A549 (cell line): ENCODE measurements at regions of chr2 and their contacts with region 1.

Region 1: GRCh38 chr2:142130111-142131009 is 456 bp downstream of the LRP1B start:
- DNase-seq: peak in 1 of 2 experiments; percentile 25
- ATAC-seq: peak; percentile 80 to 87
- H3K4me3 ChIP-seq: peak overlapping the region; percentile 43
- H3K27ac ChIP-seq: no peak overlapping the region
- H3K4me1 ChIP-seq: peaks cover 7% of the 10 kb centered on the region; the same call in 2 of the 3 replicates
- CTCF ChIP-seq: no peak
- EP300 ChIP-seq: no peak
- POLR2A ChIP-seq: no peak
- RAD21 ChIP-seq: no peak

Region 2: GRCh38 chr2:142140434-142140845 is 10.1 kb after region 1 on chr2:
- CTCF ChIA-PET with region 1: interaction called, 22 read pairs
- POLR2A ChIA-PET with region 1: no interaction called
- DNase-seq: peak in 1 of 2 experiments; percentile 10
- ATAC-seq: peak in 1 of 2 experiments; percentile 64; a peak in 2 of 6 replicates
- H3K4me3 ChIP-seq: no peak overlapping the region
- H3K27ac ChIP-seq: no peak overlapping the region
- H3K4me1 ChIP-seq: no peaks in the 10 kb centered on the region
- CTCF ChIP-seq: peak; percentile 75
- EP300 ChIP-seq: no peak
- POLR2A ChIP-seq: no peak
- RAD21 ChIP-seq: peak; percentile 74 to 85

Region 3: DNA sequence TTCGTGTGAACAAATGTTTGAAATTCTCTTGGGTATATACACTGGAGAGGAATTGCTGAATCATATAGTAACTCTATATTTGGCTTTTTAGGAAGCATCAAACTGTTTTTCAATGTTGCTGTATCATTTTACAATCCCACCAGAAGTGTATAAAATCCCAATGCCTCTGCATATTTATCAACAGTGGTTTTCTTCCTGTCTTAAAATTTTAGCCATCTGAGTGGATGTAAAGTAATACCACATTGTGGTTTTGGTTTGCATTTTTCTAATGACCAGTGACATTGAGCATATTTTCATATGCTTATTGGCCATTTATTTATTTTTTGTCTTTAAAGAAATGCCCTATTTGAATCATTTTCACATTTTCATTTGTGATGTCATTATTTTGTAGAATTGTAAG is 23.2 kb after region 1 on chr2:
- CTCF ChIA-PET with region 1: no interaction called
- POLR2A ChIA-PET with region 1: no interaction called
- DNase-seq: no peak
- ATAC-seq: no peak
- H3K4me3 ChIP-seq: no peak overlapping the region
- H3K27ac ChIP-seq: no peak overlapping the region
- H3K4me1 ChIP-seq: no peaks in the 10 kb centered on the region
- CTCF ChIP-seq: no peak
- EP300 ChIP-seq: no peak
- POLR2A ChIP-seq: no peak
- RAD21 ChIP-seq: no peak